Activated naive CD4-positive, alpha-beta T cell treated with anti-CD3 and anti-CD28 coated beads for 36 hours (primary cell): ENCODE measurements at regions of chr5 and their contacts with region 1.

Region 1: GRCh38 chr5:140145818-140146522 is 20.2 kb downstream of the IGIP start:
- DNase-seq: peak; percentile 64
- H3K4me3 Mint-ChIP-seq: peak overlapping the region; percentile 52
- H3K27ac Mint-ChIP-seq: no peak overlapping the region
- H3K4me1 Mint-ChIP-seq: peaks cover 15% of the 10 kb centered on the region
- H3K27me3 Mint-ChIP-seq: peaks cover 20% of the 10 kb centered on the region

Region 2: DNA sequence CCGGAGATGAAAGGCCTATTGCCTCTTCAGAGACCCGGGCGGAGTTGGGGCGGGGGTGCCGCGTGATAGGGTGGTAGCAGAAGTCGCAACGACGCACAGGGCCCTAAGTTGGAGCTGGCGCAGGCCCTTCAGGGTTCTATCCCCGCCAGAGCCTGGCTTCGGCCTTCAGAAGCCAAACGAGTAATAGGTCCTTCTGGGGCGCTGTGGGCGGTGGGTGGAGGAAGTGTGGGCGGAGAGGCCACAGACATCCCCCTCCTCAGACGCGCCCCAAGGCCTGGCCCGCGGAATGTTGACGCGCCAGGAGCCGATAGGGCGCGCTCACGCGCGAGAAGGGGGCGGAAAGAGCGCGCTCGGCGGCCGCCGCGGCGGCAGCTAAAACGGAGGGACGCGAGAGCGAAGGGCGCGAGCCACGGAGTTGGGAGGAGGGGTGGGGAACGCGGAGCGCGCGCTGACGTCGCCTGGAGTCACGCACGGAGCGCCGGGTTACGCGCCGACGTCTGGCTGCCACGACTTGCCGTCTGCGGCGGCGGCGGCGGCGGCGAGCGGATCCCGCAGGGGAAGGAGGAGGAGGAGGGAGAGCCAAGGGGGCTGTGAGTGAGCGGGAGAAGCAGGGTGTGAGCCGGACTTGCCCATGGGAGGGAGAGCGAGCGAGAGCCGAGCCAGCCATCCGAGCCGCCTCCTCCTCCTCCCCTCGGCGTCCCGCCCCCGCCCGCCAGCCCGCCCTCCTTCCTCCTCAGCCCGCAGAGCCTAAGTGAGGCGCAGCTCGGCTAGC is 38.5 kb before region 1 on chr5:
- CTCF ChIA-PET with region 1: interaction called, 14 read pairs
- intact Hi-C with region 1: no loop called
- DNase-seq: peak; percentile 91
- H3K4me3 Mint-ChIP-seq: peak overlapping the region; percentile 98
- H3K27ac Mint-ChIP-seq: peak overlapping the region; percentile 91
- H3K4me1 Mint-ChIP-seq: peaks cover 39% of the 10 kb centered on the region
- H3K27me3 Mint-ChIP-seq: no peaks in the 10 kb centered on the region

Region 3: GRCh38 chr5:140113699-140114263 is 32.2 kb before region 1 on chr5 and contains the start of gene PURA:
- CTCF ChIA-PET with region 1: interaction called, 14 read pairs
- intact Hi-C with region 1: loop called (anchors 1 kb)
- DNase-seq: peak; percentile 98
- H3K4me3 Mint-ChIP-seq: peak within 1 kb of the TSS; percentile 91
- H3K27ac Mint-ChIP-seq: peak within 1 kb of the TSS; percentile 90
- H3K4me1 Mint-ChIP-seq: peaks cover 66% of the 10 kb centered on the region
- H3K27me3 Mint-ChIP-seq: no peaks in the 10 kb centered on the region
- total RNA-seq, gene PURA: 9.0 to 10.3 TPM

Region 4: DNA sequence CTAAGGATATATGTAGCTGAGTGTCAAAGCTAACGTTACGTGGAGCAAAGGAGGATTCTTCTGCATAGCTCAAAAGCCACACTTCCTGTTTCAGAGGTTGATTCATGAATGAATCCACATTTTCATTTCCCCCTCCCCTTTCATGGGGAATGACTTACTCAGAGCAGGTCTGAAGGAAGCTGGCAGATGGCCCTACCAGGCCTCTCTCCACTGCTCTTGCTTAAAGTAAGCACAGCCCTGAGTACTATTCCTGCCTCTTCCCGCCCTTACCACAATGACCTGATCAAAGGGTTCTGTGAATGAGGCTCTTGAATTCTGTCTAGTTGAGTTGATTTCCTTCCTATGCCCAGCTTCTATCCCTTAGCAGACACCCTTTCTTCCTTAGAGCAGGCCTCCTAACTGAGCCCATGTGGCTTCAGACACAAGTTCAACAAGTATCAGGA is 14.0 kb before region 1 on chr5:
- CTCF ChIA-PET with region 1: interaction called, 39 read pairs
- intact Hi-C with region 1: no loop called
- DNase-seq: peak; percentile 55
- H3K4me3 Mint-ChIP-seq: no peak overlapping the region
- H3K27ac Mint-ChIP-seq: no peak overlapping the region
- H3K4me1 Mint-ChIP-seq: peaks cover 39% of the 10 kb centered on the region
- H3K27me3 Mint-ChIP-seq: no peaks in the 10 kb centered on the region

Region 5: DNA sequence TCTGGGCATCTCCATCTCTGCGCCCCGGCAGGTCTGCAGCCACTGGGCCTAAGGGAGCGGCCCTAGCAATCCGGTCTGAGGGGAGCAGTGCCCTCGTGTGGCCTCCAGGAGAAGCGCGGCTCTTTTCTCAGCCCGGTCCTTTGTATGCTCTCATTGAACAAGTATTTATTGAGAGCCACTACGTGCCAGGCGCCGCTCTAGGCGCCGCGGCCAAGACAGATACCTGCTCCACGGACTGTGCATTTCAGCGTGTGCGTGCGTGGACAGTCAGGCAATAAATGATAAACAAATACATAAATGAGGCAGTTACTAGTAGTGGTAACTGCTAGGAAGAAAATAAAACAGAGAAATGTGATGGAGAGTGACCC is 211.7 kb after region 1 on chr5:
- CTCF ChIA-PET with region 1: no interaction called
- intact Hi-C with region 1: loop called (anchors 1 kb)
- DNase-seq: peak; percentile 85
- H3K4me3 Mint-ChIP-seq: peak overlapping the region; percentile 56
- H3K27ac Mint-ChIP-seq: no peak overlapping the region
- H3K4me1 Mint-ChIP-seq: peaks cover 8% of the 10 kb centered on the region
- H3K27me3 Mint-ChIP-seq: peaks cover 3% of the 10 kb centered on the region